HEK293 (cell line): ENCODE measurements at regions of chr6 and their contacts with region 1.

Region 1: DNA sequence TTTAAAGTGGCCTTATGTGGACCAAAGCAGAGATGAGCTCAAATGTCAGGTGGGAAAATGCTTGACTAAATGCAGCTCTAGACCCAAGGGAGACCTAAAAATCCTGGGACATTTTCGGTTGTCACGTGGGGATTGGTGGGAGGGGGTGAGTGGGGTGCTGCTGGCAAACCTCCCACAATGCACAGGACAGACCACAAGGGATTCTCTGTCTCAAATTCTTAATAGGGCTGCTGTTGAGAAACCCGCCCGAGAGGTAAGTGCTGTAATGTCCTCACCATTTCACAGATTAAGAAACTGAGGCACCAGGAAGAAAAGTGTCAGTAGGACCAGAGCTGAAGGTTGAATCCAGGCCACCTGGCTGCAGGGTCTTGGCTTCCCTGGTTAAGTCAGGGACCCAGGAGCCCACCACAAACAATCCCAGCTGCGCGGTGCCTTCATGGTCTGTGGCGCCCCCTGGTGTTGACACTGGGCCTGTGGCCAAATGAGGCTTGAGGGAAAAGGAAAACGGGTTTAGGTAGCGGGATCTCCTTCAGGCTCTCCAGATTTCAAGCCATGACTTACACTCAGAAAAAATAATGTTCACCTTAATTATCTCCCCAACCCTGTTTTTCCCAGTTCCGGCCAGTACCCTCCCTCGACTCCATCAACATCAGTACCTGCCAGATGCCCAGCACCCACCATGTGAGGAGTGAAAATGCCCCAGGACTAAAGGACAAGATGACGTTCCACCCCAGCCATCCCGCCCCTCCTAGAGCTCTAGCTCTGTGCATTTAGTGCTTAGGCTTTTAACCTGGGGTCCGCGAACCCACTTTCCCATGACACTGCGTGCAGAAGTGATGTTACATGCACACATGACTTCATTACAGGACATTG is 7.2 kb downstream of the HLA-G start:
- H3K4me3 ChIP-seq: no peak overlapping the region
- H3K27ac ChIP-seq: no peak overlapping the region
- H3K4me1 ChIP-seq: no peaks in the 10 kb centered on the region
- CTCF ChIP-seq: peak; percentile 58; the same call in 1 of the 2 replicates

Region 2: DNA sequence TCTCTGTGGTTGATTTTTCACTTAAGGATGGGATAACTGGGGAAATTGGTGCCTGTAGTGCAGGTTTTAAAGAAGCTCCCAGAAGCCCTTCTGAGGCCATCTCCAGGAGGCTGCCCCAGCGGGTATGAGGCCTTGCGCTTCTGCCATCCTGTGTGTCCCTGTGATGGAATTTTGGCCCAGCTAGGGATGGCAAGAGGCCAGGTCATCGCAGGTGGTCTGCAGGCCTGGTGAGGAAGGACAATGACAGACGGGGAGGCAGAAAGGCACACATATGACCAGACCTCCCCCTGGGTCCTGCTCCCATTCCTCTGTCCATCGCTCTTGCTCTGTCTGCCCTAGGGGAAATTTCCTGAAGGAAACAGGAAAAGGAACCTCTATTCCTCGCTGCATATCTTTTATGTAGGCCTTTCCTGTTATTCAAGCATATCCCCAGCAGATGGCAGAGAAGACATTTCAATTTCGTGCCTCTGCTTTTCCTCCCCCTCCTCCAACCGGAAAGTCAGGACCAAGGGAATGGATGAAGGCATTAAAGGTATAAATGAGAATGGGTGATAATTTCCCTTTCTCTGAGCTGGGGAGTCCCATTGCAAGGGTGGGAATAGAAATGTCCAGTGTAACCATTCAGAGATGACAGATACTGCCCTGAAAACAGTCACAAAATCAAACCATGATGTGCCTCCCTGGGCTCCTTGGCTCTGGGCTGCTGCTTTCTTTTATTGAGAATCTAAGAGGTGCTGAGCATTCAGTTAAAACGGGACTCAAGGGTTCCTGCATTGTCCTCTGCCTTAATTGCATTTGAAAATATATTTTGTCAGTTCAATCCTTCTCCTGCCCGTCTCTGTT is 129.2 kb before region 1 on chr6:
- CTCF ChIA-PET with region 1: interaction called, 34 read pairs
- POLR2A ChIA-PET with region 1: no interaction called
- H3K4me3 ChIP-seq: no peak overlapping the region
- H3K27ac ChIP-seq: no peak overlapping the region
- H3K4me1 ChIP-seq: no peaks in the 10 kb centered on the region
- CTCF ChIP-seq: peak; percentile 62

Region 3: DNA sequence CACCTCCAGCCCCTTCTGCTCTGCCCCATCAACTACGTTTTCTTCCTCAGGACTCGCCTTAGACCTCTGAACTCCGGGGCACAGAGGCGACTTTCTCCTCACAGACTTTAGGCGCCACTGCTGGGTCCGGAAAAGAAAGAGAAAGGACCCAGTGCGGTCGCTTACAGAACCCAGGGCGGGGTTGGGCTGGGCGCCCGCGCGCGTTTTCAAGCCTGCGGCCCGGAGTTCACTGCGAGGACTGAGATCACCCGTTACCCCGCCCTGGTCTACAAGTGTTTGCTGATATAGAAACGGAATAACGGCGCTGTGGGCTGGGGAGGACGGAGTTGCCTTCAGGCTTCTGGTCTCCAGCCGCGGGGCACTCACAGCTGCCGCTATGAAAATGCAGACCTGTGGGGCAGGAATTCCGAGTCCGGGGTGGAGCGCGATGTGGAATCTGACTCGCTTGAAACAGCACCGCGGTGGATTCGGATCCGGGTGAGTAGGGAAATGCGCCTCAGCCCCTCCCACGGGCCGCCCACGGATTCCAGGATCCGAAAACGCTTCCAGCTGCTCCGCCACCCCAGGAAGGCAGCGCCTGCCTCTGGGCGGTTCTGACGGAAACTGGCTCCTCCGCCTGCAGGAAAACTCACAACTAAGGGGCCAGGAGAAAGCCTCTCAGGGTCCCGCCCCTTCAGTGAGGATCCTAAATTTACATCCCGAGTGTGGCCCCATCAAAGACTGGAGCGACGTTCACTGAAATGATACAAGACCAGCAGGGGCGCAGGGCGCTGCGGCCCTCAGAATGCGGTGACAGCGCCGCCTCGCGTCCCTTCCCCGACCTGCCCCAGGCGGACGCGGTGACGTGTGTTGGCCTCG is 82.1 kb before region 1 on chr6:
- CTCF ChIA-PET with region 1: interaction called, 24 read pairs
- POLR2A ChIA-PET with region 1: no interaction called
- H3K4me3 ChIP-seq: peak overlapping the region; percentile 75
- H3K27ac ChIP-seq: peak overlapping the region; percentile 46; the same call in 1 of the 2 replicates
- H3K4me1 ChIP-seq: peaks cover 5% of the 10 kb centered on the region; the same call in 1 of the 2 replicates
- CTCF ChIP-seq: peak; percentile 99

Region 4: DNA sequence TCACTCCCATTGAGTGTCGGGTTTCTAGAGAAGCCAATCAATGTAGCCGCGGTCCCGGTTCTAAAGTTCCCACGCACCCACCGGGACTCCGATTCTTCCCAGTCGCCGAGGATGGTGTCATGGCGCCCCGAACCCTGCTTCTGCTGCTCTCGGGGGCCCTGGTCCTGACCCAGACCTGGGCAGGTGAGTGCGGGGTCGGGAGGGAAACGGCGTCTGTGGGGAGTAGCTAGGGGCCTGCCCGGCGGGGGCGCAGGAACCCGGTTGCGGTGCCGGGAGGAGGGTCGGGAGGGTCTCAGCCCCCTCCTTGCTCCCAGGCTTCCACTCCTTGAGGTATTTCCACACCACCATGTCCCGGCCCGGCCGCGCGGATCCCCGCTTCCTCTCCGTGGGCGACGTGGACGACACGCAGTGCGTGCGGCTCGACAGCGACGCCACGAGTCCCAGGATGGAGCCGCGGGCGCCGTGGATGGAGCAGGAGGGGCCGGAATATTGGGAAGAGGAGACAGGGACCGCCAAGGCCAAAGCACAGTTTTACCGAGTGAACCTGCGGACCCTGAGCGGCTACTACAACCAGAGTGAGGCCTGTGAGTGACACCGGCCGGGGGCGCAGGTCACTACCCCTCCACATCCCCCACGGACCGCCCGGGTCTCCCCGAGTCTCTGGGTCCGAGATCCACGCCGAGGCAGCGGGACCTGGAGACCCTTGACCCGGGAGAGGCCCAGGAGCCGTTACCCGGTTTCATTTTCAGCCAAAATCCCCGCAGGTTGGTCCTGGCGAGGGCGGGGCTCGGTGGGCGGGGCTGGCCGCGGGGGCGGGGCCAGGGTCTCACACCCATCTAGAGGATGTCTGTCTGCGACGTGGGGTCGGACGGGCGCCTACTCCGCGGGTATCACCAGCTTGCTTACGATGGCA is 42.4 kb before region 1 on chr6:
- CTCF ChIA-PET with region 1: interaction called, 10 read pairs
- POLR2A ChIA-PET with region 1: no interaction called
- H3K4me3 ChIP-seq: peak overlapping the region; percentile 54
- H3K27ac ChIP-seq: no peak overlapping the region
- H3K4me1 ChIP-seq: no peaks in the 10 kb centered on the region
- CTCF ChIP-seq: no peak

Region 5: GRCh38 chr6:29847871-29848630 is 13.3 kb after region 1 on chr6:
- CTCF ChIA-PET with region 1: interaction called, 27 read pairs
- POLR2A ChIA-PET with region 1: no interaction called
- H3K4me3 ChIP-seq: no peak overlapping the region
- H3K27ac ChIP-seq: no peak overlapping the region
- H3K4me1 ChIP-seq: no peaks in the 10 kb centered on the region
- CTCF ChIP-seq: peak; percentile 95

Region 6: GRCh38 chr6:31094389-31094881 is 1259.6 kb after region 1 on chr6:
- CTCF ChIA-PET with region 1: no interaction called
- POLR2A ChIA-PET with region 1: no interaction called
- H3K4me3 ChIP-seq: no peak overlapping the region
- H3K27ac ChIP-seq: no peak overlapping the region
- H3K4me1 ChIP-seq: no peaks in the 10 kb centered on the region
- CTCF ChIP-seq: no peak